ENCODE measurements at regions of chr12 and their contacts with region 1.

Region 1: DNA sequence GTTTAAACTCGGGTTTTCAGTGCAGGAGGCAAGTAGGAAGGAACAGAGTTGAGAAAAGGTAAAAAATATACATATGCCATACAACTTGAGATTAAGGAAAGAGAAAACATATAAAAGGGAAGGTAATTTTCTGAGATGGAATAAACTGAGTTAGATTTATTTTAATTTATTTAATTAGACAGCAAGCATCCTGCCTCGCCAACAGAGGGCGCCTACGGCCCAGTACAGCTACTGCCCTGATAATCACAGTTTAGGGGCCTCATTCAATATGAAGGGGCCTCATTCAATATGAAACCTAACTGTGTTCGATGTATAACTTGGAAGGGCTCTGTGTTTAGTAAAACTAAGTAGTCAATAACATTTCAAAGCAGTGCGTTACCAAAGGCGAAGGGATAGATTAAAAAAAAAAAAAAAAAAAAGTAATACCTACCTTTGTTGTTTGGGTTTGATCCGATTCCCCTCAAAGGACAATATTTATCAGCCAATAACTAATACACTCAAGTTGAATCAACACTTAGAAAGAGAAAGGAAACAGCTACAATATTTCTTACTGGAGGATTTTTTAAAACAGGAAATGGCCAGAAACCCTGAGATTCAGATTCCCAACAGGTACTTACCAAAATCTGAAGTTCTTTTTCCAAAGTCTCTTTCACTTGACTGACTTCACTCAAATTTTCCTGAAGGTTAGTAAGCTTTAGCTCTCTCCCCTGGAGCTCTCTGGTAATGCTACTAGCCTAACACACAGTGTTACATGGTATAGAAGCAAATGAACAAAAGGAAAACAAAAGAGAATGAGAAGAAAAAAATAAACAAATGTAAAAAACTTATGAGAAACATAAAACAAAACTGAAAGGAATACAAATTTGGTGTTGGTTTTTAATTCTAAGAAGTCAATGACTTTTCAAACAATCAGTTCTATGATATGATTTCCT is 70.0 kb upstream of the VPS33A start:
- H3K4me3 ChIP-seq: no peak overlapping the region
- H3K27ac ChIP-seq: no peak overlapping the region
- H3K4me1 ChIP-seq: no peaks in the 10 kb centered on the region
- CTCF ChIP-seq: peak; percentile 57; the same call in 1 of the 2 replicates

Region 2: GRCh38 chr12:122203301-122204166 is 132.7 kb before region 1 on chr12 and contains the start of gene B3GNT4:
- CTCF ChIA-PET with region 1: no interaction called
- POLR2A ChIA-PET with region 1: no interaction called
- H3K4me3 ChIP-seq: peak within 1 kb of the TSS; percentile 46
- H3K27ac ChIP-seq: no peak within 1 kb of the TSS; the same call in 1 of the 2 replicates
- H3K4me1 ChIP-seq: peaks cover 6% of the 10 kb centered on the region; the same call in 1 of the 2 replicates
- CTCF ChIP-seq: no peak

Region 3: GRCh38 chr12:122322501-122322900 is 13.8 kb before region 1 on chr12:
- CTCF ChIA-PET with region 1: interaction called, 15 read pairs
- POLR2A ChIA-PET with region 1: no interaction called
- H3K4me3 ChIP-seq: no peak overlapping the region
- H3K27ac ChIP-seq: no peak overlapping the region
- H3K4me1 ChIP-seq: no peaks in the 10 kb centered on the region
- CTCF ChIP-seq: no peak

Region 4: GRCh38 chr12:122350141-122350848 is 14.0 kb after region 1 on chr12:
- CTCF ChIA-PET with region 1: interaction called, 102 read pairs
- POLR2A ChIA-PET with region 1: no interaction called
- H3K4me3 ChIP-seq: no peak overlapping the region
- H3K27ac ChIP-seq: no peak overlapping the region
- H3K4me1 ChIP-seq: no peaks in the 10 kb centered on the region
- CTCF ChIP-seq: no peak

Region 5: GRCh38 chr12:122356192-122356635 is 19.9 kb after region 1 on chr12:
- CTCF ChIA-PET with region 1: interaction called, 102 read pairs
- POLR2A ChIA-PET with region 1: no interaction called
- H3K4me3 ChIP-seq: no peak overlapping the region
- H3K27ac ChIP-seq: no peak overlapping the region
- H3K4me1 ChIP-seq: no peaks in the 10 kb centered on the region
- CTCF ChIP-seq: peak; percentile 63; the same call in 1 of the 2 replicates

Region 6: DNA sequence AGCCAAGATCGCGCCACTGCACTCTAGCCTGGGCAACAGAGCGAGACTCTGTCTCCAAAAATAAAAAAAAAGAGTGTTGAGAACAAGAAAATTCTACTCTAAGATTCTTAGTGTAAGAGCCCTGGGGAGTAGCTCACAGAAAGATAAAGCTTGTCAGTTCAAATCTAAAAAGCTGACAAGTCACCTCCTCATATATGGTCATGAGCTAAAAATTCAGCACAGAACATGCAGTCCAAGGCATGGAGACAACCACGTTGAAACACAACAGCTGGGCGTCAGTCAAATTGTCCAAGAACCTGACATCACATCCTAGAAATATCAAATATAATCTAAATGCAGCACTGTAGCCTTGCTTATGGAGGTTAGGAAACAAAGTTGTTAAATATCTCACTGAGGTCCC is 38.4 kb after region 1 on chr12:
- CTCF ChIA-PET with region 1: no interaction called
- POLR2A ChIA-PET with region 1: no interaction called
- H3K4me3 ChIP-seq: no peak overlapping the region
- H3K27ac ChIP-seq: no peak overlapping the region
- H3K4me1 ChIP-seq: no peaks in the 10 kb centered on the region; the same call in 1 of the 2 replicates
- CTCF ChIP-seq: no peak

Region 7: GRCh38 chr12:122471324-122472226 is 135.3 kb after region 1 on chr12:
- CTCF ChIA-PET with region 1: interaction called, 26 read pairs
- POLR2A ChIA-PET with region 1: no interaction called
- H3K4me3 ChIP-seq: no peak overlapping the region
- H3K27ac ChIP-seq: no peak overlapping the region; the same call in 1 of the 2 replicates
- H3K4me1 ChIP-seq: 0 out of 2 replicates have a peak, but pooled peaks cover 3% of the 10 kb centered on the region
- CTCF ChIP-seq: no peak

Measured in HEK293 (cell line).